ENCODE measurements at regions of chr10 and their contacts with region 1.

Region 1: DNA sequence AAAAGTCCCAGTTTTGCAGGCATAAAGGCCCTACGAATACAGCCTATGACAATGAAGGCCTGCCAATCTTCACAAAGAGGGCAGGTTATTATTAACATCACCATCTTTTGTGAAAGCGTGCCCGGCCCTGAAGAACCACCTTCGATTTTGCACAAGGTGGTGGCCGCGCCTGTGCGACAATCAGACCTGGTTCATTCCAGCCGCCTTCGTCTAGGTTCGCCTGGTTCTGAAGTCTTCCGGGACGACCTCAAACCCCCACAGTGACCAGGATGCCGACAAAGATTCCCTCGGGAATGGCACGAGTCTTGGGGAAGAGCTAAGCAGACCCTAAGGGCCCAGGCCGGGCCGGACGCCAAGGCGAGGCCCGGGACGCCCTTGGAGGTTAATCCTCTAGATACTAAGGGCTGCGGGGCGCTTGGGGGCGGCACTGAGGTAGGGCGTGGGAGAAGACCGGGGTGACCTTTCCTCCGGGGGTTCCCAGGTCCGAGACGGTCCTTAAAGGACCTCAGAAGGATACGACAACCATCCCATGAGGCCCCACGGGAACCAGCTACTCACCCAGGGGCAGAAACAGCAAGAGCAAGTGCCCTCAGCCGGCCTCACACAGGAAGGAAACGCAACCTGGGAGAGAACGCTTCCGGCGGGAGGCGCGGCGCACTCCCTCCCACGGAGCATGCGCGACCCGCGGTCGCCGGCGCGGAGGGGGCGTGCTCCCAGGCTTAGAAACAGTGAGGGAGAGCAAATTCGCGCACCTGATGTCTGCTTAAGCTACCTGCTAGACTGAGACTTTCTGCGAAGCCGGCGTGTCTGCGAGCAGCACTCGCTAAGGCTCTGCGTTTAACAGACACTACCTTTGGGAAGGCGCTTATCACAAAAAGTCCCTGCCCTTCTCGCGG is at the start of gene ATAD1:
- DNase-seq: peak; percentile 90
- H3K4me3 Mint-ChIP-seq: peak within 1 kb of the TSS; percentile 93
- H3K27ac Mint-ChIP-seq: peak within 1 kb of the TSS; percentile 92
- H3K4me1 Mint-ChIP-seq: peaks cover 35% of the 10 kb centered on the region
- H3K27me3 Mint-ChIP-seq: peaks cover 2% of the 10 kb centered on the region
- total RNA-seq, gene ATAD1: 42.9 to 45.9 TPM

Region 2: DNA sequence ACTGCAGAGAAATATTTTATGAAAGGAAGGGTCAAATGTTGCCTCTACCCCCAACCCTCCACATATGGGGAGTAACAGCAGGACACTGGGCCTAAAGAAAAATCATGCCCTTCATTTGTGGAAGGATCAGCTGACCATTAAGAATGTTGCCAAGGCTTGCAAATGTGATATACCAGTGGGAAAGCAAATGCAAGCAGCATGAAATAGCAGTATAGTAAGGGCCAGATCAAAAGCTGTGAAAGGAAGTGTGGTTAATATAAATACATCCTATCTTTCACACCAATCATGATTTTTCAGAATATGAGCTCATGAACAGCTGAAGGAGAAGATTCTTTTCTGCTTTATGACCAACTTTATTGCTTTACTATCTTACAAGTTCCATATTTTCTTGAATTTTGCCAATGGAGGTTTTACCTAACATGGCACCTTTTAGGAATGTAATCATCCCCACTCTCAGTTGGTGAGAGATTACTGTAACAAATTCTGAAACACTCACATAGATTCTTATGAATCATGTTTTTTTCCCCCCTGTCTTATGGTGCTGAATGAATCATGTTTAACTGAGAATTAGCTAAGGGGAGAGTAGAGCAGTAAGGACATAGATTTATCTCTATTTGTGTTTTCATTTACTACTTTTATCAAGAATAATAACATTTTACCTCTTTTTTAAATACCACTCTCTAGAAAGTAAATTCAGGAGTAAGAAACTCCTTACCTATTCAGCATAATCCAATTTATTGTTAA is 12.3 kb after region 1 on chr10:
- CTCF ChIA-PET with region 1: interaction called, 28 read pairs
- POLR2A ChIA-PET with region 1: interaction called, 3 read pairs
- DNase-seq: no peak
- H3K4me3 Mint-ChIP-seq: no peak overlapping the region
- H3K27ac Mint-ChIP-seq: no peak overlapping the region
- H3K4me1 Mint-ChIP-seq: peaks cover 14% of the 10 kb centered on the region
- H3K27me3 Mint-ChIP-seq: peaks cover 2% of the 10 kb centered on the region

Region 3: DNA sequence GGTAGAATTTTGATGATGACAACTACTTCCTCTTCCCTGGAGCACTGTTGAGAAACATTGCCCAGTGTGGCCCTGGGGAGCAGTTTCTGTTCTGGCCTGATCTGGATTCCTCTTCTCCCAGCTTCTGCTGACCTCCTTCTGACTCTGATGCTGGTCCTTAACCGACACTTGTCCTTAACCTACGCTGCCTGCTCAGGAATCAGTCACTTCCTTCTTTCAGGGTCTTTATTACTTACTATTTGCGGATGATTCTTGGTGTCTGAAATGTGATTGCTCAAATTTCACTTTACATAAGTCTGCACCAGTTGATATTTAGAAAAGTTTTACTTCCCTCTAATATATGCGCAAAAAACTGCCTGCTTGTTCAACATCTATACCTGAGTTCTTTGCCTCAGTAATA is 209.7 kb after region 1 on chr10:
- CTCF ChIA-PET with region 1: no interaction called
- POLR2A ChIA-PET with region 1: no interaction called
- DNase-seq: no peak
- H3K4me3 Mint-ChIP-seq: no peak overlapping the region
- H3K27ac Mint-ChIP-seq: no peak overlapping the region
- H3K4me1 Mint-ChIP-seq: peaks cover 8% of the 10 kb centered on the region
- H3K27me3 Mint-ChIP-seq: no peaks in the 10 kb centered on the region